Mammary epithelial cell (primary cell): ENCODE measurements at regions of chr15 and their contacts with region 1.

Region 1: GRCh38 chr15:98647774-98648653 is at the start of gene IGF1R:
- DNase-seq: peak; percentile 89
- H3K4me3 ChIP-seq: peak within 1 kb of the TSS; percentile 89 to 100 (median 98)
- H3K27ac ChIP-seq: peak within 1 kb of the TSS; percentile 91
- H3K4me1 ChIP-seq: peaks cover 13% of the 10 kb centered on the region
- H3K27me3 ChIP-seq: no peaks in the 10 kb centered on the region
- CTCF ChIP-seq: peak in 1 of 2 donors; percentile 4
- total RNA-seq, gene IGF1R: 42.3 to 60.3 TPM

Region 2: GRCh38 chr15:98518823-98519561 is 129.0 kb before region 1 on chr15:
- CTCF ChIA-PET with region 1: no interaction called
- dilution Hi-C with region 1: no loop called
- in situ Hi-C with region 1: loop called in 1 of 2 experiments (anchors 10 kb)
- intact Hi-C with region 1: loop called (anchors 1 kb)
- DNase-seq: peak; percentile 57
- H3K4me3 ChIP-seq: no peak overlapping the region
- H3K27ac ChIP-seq: no peak overlapping the region
- H3K4me1 ChIP-seq: no peaks in the 10 kb centered on the region
- H3K27me3 ChIP-seq: no peaks in the 10 kb centered on the region
- CTCF ChIP-seq: peak; percentile 63 to 83

Region 3: GRCh38 chr15:98581715-98582114 is 66.3 kb before region 1 on chr15:
- CTCF ChIA-PET with region 1: interaction called, 8 read pairs
- dilution Hi-C with region 1: no loop called
- in situ Hi-C with region 1: no loop called
- intact Hi-C with region 1: loop called (anchors 1 kb)
- DNase-seq: no peak
- H3K4me3 ChIP-seq: no peak overlapping the region
- H3K27ac ChIP-seq: no peak overlapping the region
- H3K4me1 ChIP-seq: peaks cover 3% of the 10 kb centered on the region
- H3K27me3 ChIP-seq: peaks cover 3% of the 10 kb centered on the region
- CTCF ChIP-seq: peak; percentile 23 to 40

Region 4: DNA sequence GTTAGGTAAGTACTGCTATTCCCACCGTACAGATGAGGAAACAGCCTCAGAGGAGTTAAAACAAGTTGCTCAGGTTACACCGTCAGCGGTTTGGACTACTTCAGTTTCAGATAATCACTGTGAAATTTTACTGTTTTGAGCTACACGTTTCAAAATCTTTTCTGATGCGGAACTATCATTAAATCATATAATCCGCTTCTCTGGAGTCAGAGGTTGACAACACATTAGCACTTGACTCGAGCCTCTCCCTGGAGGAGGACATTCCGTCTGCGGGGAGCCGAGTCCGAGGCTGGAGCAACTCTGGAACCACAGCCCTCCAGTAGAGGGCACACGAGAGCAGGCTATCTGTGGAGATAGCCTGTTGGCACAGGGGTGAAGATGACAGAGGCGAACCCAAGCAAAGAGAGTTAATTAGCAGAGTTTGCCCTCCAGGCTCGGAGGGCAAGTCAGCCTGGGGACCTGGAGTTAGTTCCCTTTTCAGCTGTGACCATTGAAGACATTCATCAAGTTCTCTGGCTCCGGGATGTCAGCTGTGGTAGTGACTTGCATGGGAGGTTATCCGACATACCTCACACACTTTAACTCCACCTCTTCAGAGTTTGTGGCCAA is 131.6 kb after region 1 on chr15:
- CTCF ChIA-PET with region 1: no interaction called
- dilution Hi-C with region 1: loop called (anchors 10 kb)
- in situ Hi-C with region 1: no loop called
- intact Hi-C with region 1: loop called (anchors 1 kb)
- DNase-seq: peak; percentile 74
- H3K4me3 ChIP-seq: no peak overlapping the region
- H3K27ac ChIP-seq: peak overlapping the region; percentile 10
- H3K4me1 ChIP-seq: peaks cover 34% of the 10 kb centered on the region
- H3K27me3 ChIP-seq: no peaks in the 10 kb centered on the region
- CTCF ChIP-seq: peak; percentile 97

Region 5: DNA sequence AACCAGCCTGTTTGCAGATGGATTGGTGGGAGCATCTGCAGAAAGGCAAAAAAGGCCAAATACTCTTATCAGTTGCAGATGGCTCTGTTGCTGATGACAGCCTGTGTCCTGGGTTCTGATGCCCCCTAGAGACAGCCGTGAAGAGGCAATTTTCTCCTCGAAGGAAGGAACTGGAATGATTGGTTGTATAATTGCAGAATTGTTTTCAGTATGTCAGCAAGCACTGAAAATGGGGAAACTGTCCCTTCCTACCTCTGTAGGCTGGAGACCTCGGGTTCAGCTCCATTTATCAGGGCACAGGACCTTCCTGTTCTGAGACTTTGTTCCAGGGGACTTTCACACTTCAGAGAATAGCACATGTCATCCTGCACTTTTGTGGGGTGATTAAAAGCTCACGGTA is 256.5 kb after region 1 on chr15:
- CTCF ChIA-PET with region 1: no interaction called
- dilution Hi-C with region 1: no loop called
- in situ Hi-C with region 1: no loop called
- intact Hi-C with region 1: loop called (anchors 1 kb)
- DNase-seq: peak; percentile 52
- H3K4me3 ChIP-seq: no peak overlapping the region
- H3K27ac ChIP-seq: peak overlapping the region; percentile 94
- H3K4me1 ChIP-seq: peaks cover 69% of the 10 kb centered on the region
- H3K27me3 ChIP-seq: no peaks in the 10 kb centered on the region
- CTCF ChIP-seq: peak; percentile 67 to 84